ENCODE measurements at regions of chr13 and their contacts with region 1.

Region 1: DNA sequence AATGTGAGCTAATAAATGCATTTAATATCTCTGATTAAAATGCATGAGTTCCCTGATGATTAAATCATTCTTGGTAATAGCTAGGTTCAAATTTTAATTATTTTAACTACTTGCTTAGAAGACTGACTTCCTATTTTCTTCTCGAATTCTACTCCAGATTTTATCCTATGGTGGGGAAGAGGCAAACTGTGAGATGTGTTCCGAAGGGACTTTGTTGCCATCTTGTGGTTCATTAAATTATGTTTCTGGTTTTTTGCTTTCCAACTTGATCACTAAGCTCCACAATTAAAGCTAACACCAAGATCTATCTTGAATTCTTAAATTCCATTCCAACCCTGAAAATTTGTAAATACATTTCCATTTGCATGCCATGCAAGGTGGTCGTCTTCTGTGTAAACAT is 538.4 kb upstream of the PCDH20 start:
- DNase-seq: peak; percentile 19
- ATAC-seq: 0 out of 2 replicates have a peak, but pooled peaks have one; percentile 42
- H3K4me3 ChIP-seq: no peak overlapping the region
- H3K27ac ChIP-seq: no peak overlapping the region
- H3K4me1 ChIP-seq: no peaks in the 10 kb centered on the region
- H3K27me3 ChIP-seq: no peaks in the 10 kb centered on the region
- CTCF ChIP-seq: peak; percentile 7 to 61 (median 20); a peak in 4 of 6 replicates
- POLR2A ChIP-seq: no peak
- RAD21 ChIP-seq: peak; percentile 60

Region 2: GRCh38 chr13:60467098-60467497 is 1487.0 kb before region 1 on chr13:
- CTCF ChIA-PET with region 1: no interaction called
- POLR2A ChIA-PET with region 1: no interaction called
- RAD21 ChIA-PET with region 1: no interaction called
- intact Hi-C with region 1: loop called (anchors 5 kb)
- DNase-seq: no peak
- ATAC-seq: no peak
- H3K4me3 ChIP-seq: no peak overlapping the region
- H3K27ac ChIP-seq: no peak overlapping the region
- H3K4me1 ChIP-seq: no peaks in the 10 kb centered on the region
- H3K27me3 ChIP-seq: no peaks in the 10 kb centered on the region
- CTCF ChIP-seq: no peak
- POLR2A ChIP-seq: no peak
- RAD21 ChIP-seq: no peak

Region 3: DNA sequence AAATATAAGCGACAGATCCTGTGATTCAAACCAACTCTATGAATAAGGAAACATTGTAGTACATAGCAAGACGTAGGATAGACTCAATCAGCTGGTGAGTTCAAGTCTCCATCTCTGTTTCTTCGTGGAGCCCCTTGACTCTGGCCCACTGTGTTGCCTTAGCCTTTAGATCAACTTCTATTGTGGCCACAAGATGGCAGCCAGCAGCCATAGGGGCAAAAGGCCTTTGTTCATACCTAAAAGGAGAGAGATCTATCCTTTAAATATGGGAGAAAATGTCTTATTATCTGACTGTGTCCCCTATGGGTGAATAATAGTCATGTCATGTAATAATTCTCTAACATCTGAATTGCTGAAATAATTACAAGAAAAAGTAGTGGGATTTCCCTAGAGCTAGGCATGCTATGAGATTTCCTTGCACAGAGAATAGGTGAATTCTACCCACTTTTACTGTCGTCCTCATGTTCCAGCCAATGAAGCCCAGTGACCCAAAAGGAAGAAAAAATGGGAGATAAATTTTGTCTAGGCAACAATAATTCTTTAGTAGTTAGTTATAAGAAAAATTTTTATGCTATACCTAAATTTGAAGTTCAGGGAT is 667.8 kb before region 1 on chr13:
- CTCF ChIA-PET with region 1: interaction called, 7 read pairs
- POLR2A ChIA-PET with region 1: no interaction called
- RAD21 ChIA-PET with region 1: no interaction called
- intact Hi-C with region 1: loop called (anchors 1 kb)
- DNase-seq: peak; percentile 16
- ATAC-seq: peak; percentile 73; the same call in 1 of the 2 replicates
- H3K4me3 ChIP-seq: no peak overlapping the region
- H3K27ac ChIP-seq: no peak overlapping the region
- H3K4me1 ChIP-seq: no peaks in the 10 kb centered on the region
- H3K27me3 ChIP-seq: no peaks in the 10 kb centered on the region
- CTCF ChIP-seq: peak; percentile 33 to 54 (median 33); a peak in 5 of 6 replicates
- POLR2A ChIP-seq: no peak
- RAD21 ChIP-seq: peak; percentile 50

Region 4: GRCh38 chr13:61880578-61881283 is 73.4 kb before region 1 on chr13:
- CTCF ChIA-PET with region 1: interaction called, 16 read pairs
- POLR2A ChIA-PET with region 1: no interaction called
- RAD21 ChIA-PET with region 1: interaction called in 1 of 2 experiments, 4 read pairs
- intact Hi-C with region 1: loop called (anchors 2 kb)
- DNase-seq: peak; percentile 26
- ATAC-seq: peak; percentile 85
- H3K4me3 ChIP-seq: no peak overlapping the region
- H3K27ac ChIP-seq: no peak overlapping the region
- H3K4me1 ChIP-seq: no peaks in the 10 kb centered on the region
- H3K27me3 ChIP-seq: no peaks in the 10 kb centered on the region
- CTCF ChIP-seq: peak in 2 of 3 experiments; percentile 62 to 65; a peak in 4 of 6 replicates
- POLR2A ChIP-seq: no peak
- RAD21 ChIP-seq: no peak; the same call in 1 of the 2 replicates

Measured in HCT116 (cell line).